MCF 10A (cell line): ENCODE measurements at regions of chr5 and their contacts with region 1.

Region 1: GRCh38 chr5:16552666-16553343 is 64.0 kb downstream of the RETREG1 start:
- DNase-seq: peak; percentile 70
- H3K4me3 Mint-ChIP-seq: no peak overlapping the region
- H3K27ac Mint-ChIP-seq: no peak overlapping the region
- H3K4me1 Mint-ChIP-seq: peaks cover 16% of the 10 kb centered on the region
- H3K27me3 Mint-ChIP-seq: no peaks in the 10 kb centered on the region
- CTCF ChIP-seq: peak; percentile 68

Region 2: GRCh38 chr5:16160706-16161105 is 392.1 kb before region 1 on chr5:
- CTCF ChIA-PET with region 1: interaction called, 4 read pairs
- POLR2A ChIA-PET with region 1: no interaction called
- intact Hi-C with region 1: loop called (anchors 5 kb)
- DNase-seq: peak; percentile 68
- H3K4me3 Mint-ChIP-seq: no peak overlapping the region
- H3K27ac Mint-ChIP-seq: no peak overlapping the region
- H3K4me1 Mint-ChIP-seq: no peaks in the 10 kb centered on the region
- H3K27me3 Mint-ChIP-seq: peaks cover 53% of the 10 kb centered on the region
- CTCF ChIP-seq: peak; percentile 62

Region 3: DNA sequence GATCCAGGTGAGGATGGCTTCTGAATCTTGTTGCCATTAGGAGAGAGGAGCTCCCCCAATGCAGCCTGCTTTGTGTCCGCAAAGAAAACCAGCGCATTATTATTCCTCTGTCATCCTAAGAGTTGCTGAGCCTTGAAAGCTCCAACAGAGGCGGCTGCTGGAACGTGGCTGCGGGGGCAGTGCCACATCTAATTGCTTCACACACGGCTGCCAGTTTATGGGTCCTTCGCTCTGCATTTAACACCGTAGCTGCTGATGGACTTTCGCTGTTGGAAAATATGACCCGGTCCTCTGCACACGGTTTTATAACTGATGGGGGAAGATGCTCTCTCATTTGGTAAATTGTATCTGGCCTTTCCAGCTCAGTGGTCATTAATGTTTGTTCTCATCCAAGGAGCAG is 125.2 kb before region 1 on chr5:
- CTCF ChIA-PET with region 1: no interaction called
- POLR2A ChIA-PET with region 1: no interaction called
- intact Hi-C with region 1: no loop called
- DNase-seq: no peak
- H3K4me3 Mint-ChIP-seq: no peak overlapping the region
- H3K27ac Mint-ChIP-seq: no peak overlapping the region
- H3K4me1 Mint-ChIP-seq: no peaks in the 10 kb centered on the region
- H3K27me3 Mint-ChIP-seq: peaks cover 22% of the 10 kb centered on the region
- CTCF ChIP-seq: no peak

Region 4: DNA sequence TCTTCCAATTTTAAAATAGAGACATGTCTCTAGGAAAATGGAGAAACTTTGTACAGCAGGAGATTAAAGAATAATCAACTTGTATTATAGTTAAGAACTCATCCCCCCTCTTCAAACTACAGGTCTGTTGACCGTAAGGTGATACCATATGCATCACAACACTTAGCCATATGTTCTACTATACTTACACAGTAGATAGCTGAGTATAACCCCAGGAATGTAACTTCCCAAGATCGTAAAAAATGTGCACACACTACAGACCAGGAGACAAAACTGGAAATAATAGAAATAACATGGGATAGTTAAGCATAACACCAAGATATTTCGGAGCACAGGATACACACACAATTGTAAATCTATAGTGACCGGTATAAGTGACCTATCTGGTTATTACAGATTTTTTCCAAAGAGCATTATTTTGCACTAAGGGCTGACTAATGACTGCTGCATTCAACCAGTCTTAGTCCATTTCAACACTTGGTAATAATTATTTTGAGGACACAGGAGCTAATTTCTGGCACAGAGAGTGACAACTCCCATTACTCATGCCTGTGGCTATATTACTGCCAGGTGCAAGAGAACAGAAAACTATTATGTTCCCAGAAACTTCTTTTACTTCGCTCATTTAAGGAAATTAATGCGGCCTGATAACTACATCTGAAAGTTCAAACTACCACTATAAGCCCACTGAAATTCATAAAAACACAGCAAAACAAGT is 71.8 kb before region 1 on chr5:
- CTCF ChIA-PET with region 1: interaction called, 21 read pairs
- POLR2A ChIA-PET with region 1: interaction called, 5 read pairs
- intact Hi-C with region 1: no loop called
- DNase-seq: no peak
- H3K4me3 Mint-ChIP-seq: no peak overlapping the region
- H3K27ac Mint-ChIP-seq: no peak overlapping the region
- H3K4me1 Mint-ChIP-seq: peaks cover 12% of the 10 kb centered on the region
- H3K27me3 Mint-ChIP-seq: no peaks in the 10 kb centered on the region
- CTCF ChIP-seq: no peak

Region 5: GRCh38 chr5:16500024-16500423 is 52.8 kb before region 1 on chr5:
- CTCF ChIA-PET with region 1: interaction called, 16 read pairs
- POLR2A ChIA-PET with region 1: interaction called, 3 read pairs
- intact Hi-C with region 1: loop called (anchors 5 kb)
- DNase-seq: no peak
- H3K4me3 Mint-ChIP-seq: no peak overlapping the region
- H3K27ac Mint-ChIP-seq: no peak overlapping the region
- H3K4me1 Mint-ChIP-seq: no peaks in the 10 kb centered on the region
- H3K27me3 Mint-ChIP-seq: no peaks in the 10 kb centered on the region
- CTCF ChIP-seq: no peak

Region 6: DNA sequence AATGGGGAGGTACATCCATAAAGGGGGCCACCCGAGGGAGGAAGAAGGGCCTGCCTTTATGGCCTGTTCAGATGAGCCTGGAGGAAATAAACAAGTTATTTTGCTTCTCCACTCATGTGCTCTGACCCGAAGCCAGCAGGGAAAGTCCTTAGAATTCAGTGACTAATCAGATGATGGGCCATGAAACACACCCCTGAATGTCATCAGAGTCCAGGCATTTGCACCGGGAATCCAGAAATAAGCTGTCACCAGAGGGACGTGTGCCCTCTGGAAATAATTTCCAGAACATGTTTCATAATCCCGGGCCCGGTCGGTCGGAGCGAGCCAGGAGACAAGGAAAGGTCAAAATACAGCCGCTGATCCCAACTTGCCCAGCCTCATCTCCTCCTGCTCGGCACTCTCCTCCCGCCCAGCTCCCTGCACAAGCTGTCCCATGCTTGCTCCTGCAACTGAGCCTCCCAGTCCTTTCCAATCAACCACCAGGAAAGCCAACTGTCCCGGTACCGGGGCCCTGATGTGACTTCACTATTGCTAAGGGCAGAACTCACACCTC is 13.6 kb before region 1 on chr5:
- CTCF ChIA-PET with region 1: interaction called, 29 read pairs
- POLR2A ChIA-PET with region 1: interaction called, 15 read pairs
- intact Hi-C with region 1: no loop called
- DNase-seq: peak; percentile 78
- H3K4me3 Mint-ChIP-seq: peak overlapping the region; percentile 28
- H3K27ac Mint-ChIP-seq: peak overlapping the region; percentile 91
- H3K4me1 Mint-ChIP-seq: peaks cover 18% of the 10 kb centered on the region
- H3K27me3 Mint-ChIP-seq: no peaks in the 10 kb centered on the region
- CTCF ChIP-seq: no peak

Region 7: DNA sequence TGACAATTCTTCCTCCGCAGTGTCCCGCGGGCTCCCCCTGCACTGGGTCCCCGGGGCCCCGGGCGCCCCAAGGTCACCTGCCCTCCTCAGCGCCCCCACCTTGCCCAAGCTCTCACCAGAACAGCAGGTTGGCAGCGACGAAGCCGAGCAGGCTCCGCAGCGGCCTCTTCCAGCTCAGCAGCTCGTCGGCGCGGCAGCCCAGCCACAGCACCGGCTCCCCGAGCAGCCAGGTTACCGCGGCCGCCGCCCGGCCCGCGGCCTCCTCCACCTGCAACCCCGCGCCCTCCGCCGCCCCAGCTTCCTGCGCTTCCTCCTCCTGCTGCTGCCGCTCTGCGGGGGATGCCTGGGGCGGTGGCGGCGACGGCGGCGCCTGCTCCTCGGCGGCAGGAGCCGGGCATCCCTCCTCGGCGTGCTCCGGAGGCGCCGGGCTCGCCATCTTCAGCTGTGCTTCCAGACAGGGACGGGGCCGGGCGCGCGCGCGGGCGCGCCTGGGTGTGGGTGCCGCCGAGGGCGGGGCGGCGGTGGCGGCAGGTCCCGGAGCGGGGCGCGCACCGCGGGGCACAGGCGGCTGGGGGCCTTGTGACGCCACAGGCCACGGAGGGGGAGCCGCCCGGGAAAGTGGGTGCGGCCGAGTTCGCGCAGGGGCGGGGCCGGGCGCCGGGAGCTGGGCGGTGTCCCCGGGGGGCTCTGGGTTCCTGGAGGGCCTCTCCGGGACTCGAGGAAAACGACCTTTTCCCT is 63.9 kb after region 1 on chr5 and contains the start of gene RETREG1:
- CTCF ChIA-PET with region 1: interaction called, 3 read pairs
- POLR2A ChIA-PET with region 1: no interaction called
- intact Hi-C with region 1: loop called (anchors 2 kb)
- DNase-seq: peak; percentile 23
- H3K4me3 Mint-ChIP-seq: no peak within 1 kb of the TSS
- H3K27ac Mint-ChIP-seq: no peak within 1 kb of the TSS
- H3K4me1 Mint-ChIP-seq: peaks cover 8% of the 10 kb centered on the region
- H3K27me3 Mint-ChIP-seq: no peaks in the 10 kb centered on the region
- CTCF ChIP-seq: no peak
- total RNA-seq, gene RETREG1: 4.9 and 5.3 TPM in 2 replicates